Posterior vena cava (tissue), 2 donors: ENCODE measurements at regions of chr2 and their contacts with region 1.

Region 1: DNA sequence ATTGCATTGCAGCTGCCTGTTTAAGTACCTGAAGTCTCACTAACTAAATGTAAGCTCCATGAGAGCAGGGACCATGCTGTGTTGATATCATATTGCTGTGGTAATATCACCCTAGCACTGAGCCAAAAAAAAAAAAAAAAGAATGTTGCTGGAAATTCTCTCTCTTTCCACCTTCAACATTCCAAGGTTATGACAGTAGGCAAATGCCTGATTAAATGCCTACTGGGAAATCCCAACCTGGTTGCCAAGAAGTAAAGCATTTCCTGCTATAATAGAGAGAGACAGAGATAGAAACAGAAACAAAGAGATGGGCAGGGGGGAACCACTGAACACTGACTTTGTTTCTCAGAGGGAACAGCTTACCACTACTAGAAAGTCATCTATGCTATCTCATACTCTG is 1604.2 kb downstream of the LRP1B start:
- DNase-seq: no peak

Region 2: GRCh38 chr2:140550821-140551220 is 24.2 kb after region 1 on chr2:
- intact Hi-C with region 1: loop called in 1 of 2 experiments (anchors 1 kb)
- DNase-seq: no peak